ENCODE measurements at regions of chr6 and their contacts with region 1.

Region 1: GRCh38 chr6:110589865-110590513 is 113.6 kb upstream of the SLC22A16 start:
- DNase-seq: no peak
- H3K4me3 Mint-ChIP-seq: no peak overlapping the region
- H3K27ac Mint-ChIP-seq: peak overlapping the region; percentile 78
- H3K4me1 Mint-ChIP-seq: peaks cover 32% of the 10 kb centered on the region
- H3K27me3 Mint-ChIP-seq: peaks cover 4% of the 10 kb centered on the region

Region 2: DNA sequence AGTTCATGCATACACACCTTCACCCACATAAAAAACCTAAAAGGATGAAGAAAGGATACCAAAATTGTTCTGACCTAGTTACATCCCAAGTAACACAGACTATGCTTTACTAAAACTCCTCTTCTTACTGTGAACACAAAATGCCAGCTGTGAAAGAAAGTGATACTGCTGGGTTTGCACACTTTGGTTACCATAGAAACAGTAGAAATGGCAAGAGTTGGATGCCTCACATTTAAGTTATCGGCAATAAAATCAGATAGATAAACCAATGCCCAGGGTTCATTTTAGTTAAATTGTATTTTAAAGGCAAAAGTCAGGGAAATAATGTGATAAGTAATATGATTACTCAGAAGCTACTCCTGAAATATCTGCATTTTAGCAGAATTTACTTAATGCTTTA is 63.4 kb after region 1 on chr6:
- intact Hi-C with region 1: loop called (anchors 2 kb)
- DNase-seq: no peak
- H3K4me3 Mint-ChIP-seq: no peak overlapping the region
- H3K27ac Mint-ChIP-seq: no peak overlapping the region
- H3K4me1 Mint-ChIP-seq: peaks cover 33% of the 10 kb centered on the region
- H3K27me3 Mint-ChIP-seq: no peaks in the 10 kb centered on the region

Measured in activated T-helper 2 cell treated with anti-CD3 and anti-CD28 coated beads, Interferon-gamma antibody, Interleukin-2, Interleukin-4, amounts not matched to agents 10 μg/mL and 5 μg/mL and 100 μg/mL, durations not matched to agents 14 hours and 24 hours and 36 hours (primary cell).